Heart left ventricle (tissue), 16 donors: ENCODE measurements at regions of chr15 and their contacts with region 1.

Region 1: GRCh38 chr15:64430000-64430735 is 30.2 kb upstream of the ZNF609 start:
- DNase-seq: peak in 4 of 5 donors; percentile 22 to 42 (median 28)
- ATAC-seq: peak in 3 of 4 donors; percentile 70 to 75 (median 72)
- H3K4me3 ChIP-seq: no peak overlapping the region
- H3K27ac ChIP-seq: peak overlapping the region in 8 of 12 donors; percentile 11 to 68 (median 40)
- H3K4me1 ChIP-seq: peaks cover 0 to 20% (median 11%) of the 10 kb centered on the region in 12 donors
- H3K27me3 ChIP-seq: no peaks in the 10 kb centered on the region
- CTCF ChIP-seq: no peak
- POLR2A ChIP-seq: no peak

Region 2: DNA sequence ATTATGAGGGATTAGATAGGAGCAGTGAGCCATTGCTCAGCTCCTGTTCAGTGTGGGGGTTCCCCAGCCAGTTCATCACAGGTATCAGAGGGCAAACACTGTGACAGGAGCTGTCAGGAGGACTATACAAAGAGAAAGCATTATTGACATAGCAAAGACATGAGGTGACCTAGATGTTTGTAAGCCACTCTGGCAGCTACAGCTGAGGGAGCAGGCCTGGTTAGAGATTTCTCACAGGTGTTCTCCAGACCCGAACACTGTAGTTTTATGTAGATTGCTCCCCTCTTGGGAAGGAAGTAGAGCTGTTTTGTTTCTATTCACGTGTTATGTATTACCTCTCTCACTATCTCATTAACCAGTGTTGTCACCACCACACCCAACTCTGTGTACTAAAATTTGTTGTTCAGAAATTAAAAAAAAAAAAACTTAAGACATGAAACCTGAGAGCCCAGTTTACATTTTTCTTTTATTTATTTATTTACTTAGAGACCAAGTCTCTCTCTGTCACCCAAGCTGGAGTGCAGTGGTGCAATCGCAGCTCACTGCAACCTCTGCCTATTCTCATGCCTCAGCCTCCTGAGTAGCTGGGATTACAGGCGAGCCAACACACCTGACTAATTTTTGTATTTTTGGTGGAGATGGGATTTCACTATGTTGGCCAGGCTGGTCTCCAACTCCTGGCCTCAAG is 221.5 kb after region 1 on chr15:
- intact Hi-C with region 1: loop called in 5 of 10 experiments (anchors 5 to 10 kb)
- DNase-seq: no peak
- ATAC-seq: no peak
- H3K4me3 ChIP-seq: no peak overlapping the region
- H3K27ac ChIP-seq: no peak overlapping the region
- H3K4me1 ChIP-seq: peaks cover 0 to 17% (median 0%) of the 10 kb centered on the region in 12 donors
- H3K27me3 ChIP-seq: no peaks in the 10 kb centered on the region
- CTCF ChIP-seq: no peak
- POLR2A ChIP-seq: no peak